K562 (cell line): ENCODE measurements at regions of chr13 and their contacts with region 1.

Region 1: GRCh38 chr13:77599351-77599750 is 63.8 kb downstream of the SCEL start:
- DNase-seq: no peak
- ATAC-seq: no peak
- H3K4me3 ChIP-seq: no peak overlapping the region
- H3K27ac ChIP-seq: no peak overlapping the region
- H3K4me1 ChIP-seq: no peaks in the 10 kb centered on the region
- H3K27me3 ChIP-seq: no peaks in the 10 kb centered on the region
- CTCF ChIP-seq: no peak
- EP300 ChIP-seq: no peak
- POLR2A ChIP-seq: no peak
- RAD21 ChIP-seq: no peak

Region 2: GRCh38 chr13:77751513-77752456 is 152.4 kb after region 1 on chr13:
- CTCF ChIA-PET with region 1: no interaction called
- POLR2A ChIA-PET with region 1: no interaction called
- in situ Hi-C with region 1: no loop called
- intact Hi-C with region 1: loop called (anchors 5 kb)
- DNase-seq: peak; percentile 21 to 35 (median 24)
- ATAC-seq: peak; percentile 73
- H3K4me3 ChIP-seq: no peak overlapping the region
- H3K27ac ChIP-seq: no peak overlapping the region
- H3K4me1 ChIP-seq: no peaks in the 10 kb centered on the region
- H3K27me3 ChIP-seq: no peaks in the 10 kb centered on the region
- CTCF ChIP-seq: peak; percentile 42 to 63 (median 48); a peak in 4 of 6 replicates
- EP300 ChIP-seq: no peak
- POLR2A ChIP-seq: no peak
- RAD21 ChIP-seq: peak; percentile 43 to 56